ENCODE measurements at regions of chr17 and their contacts with region 1.

Region 1: DNA sequence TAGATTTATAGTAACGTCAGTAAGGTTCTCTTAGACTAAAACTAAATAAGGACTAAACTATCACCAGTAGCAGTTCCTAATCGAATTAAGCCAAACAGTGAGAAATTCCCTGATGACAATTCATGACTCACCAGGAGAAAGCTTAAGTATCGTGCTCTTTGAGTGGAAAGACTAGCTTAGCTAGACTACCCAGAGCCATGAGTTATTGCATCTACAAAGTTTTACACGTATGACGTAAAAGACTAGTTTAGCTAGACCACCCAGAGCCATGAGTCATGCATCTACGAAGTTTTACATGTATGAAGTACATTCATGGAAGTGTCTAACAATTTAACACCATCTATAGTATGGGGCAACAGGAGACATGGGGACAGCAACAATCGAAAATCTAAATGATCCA is 36.6 kb downstream of the UBE2G1 start:
- DNase-seq: peak; percentile 96
- H3K4me3 ChIP-seq: no peak overlapping the region
- H3K27ac ChIP-seq: peak overlapping the region; percentile 95
- H3K4me1 ChIP-seq: peaks cover 45% of the 10 kb centered on the region
- H3K27me3 ChIP-seq: no peaks in the 10 kb centered on the region
- CTCF ChIP-seq: no peak

Region 2: GRCh38 chr17:4394208-4395110 is 64.6 kb after region 1 on chr17:
- CTCF ChIA-PET with region 1: no interaction called
- dilution Hi-C with region 1: no loop called
- in situ Hi-C with region 1: no loop called
- intact Hi-C with region 1: loop called (anchors 2 kb)
- DNase-seq: peak; percentile 90
- H3K4me3 ChIP-seq: peak overlapping the region; percentile 7 to 32 (median 20)
- H3K27ac ChIP-seq: peak overlapping the region; percentile 80
- H3K4me1 ChIP-seq: peaks cover 32% of the 10 kb centered on the region
- H3K27me3 ChIP-seq: no peaks in the 10 kb centered on the region
- CTCF ChIP-seq: no peak

Region 3: DNA sequence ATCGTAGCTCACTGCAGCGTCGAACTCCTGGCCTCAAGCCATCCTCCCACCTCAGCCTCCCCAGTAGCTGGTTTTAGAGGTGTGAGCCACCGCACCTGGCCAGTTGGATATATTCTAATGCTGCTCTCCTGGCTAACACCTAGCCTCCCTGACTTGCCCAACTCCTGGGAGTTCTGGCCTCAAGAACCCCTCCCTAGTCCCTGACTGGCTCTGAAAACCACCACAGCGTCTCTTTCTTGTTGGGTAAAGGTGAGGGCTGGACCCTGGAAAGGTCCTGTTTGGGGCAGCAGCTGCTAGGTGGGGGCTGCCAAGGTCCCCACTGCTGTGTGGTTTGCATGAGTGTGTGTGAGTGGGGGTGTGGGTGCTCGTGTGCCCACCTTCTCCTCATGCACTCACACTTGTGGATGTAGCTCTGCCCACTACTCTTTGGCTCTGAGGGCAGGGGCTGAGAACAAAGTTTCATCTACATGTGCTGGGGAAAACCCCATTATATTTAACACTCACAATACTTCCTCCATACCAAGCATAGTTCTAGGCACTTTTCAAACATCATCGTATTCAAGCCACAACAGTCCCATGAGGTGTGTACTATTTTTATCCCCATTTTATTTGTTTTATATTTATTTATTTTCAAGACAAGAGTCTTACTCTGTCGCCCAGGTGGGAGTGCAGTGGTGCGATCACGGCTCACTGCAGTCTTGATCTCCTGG is 96.8 kb after region 1 on chr17:
- CTCF ChIA-PET with region 1: no interaction called
- dilution Hi-C with region 1: no loop called
- in situ Hi-C with region 1: no loop called
- intact Hi-C with region 1: no loop called
- DNase-seq: no peak
- H3K4me3 ChIP-seq: no peak overlapping the region
- H3K27ac ChIP-seq: no peak overlapping the region
- H3K4me1 ChIP-seq: no peaks in the 10 kb centered on the region
- H3K27me3 ChIP-seq: no peaks in the 10 kb centered on the region
- CTCF ChIP-seq: no peak

Measured in mammary epithelial cell (primary cell).